OCI-LY7 (cell line): ENCODE measurements at regions of chr9 and their contacts with region 1.

Region 1: DNA sequence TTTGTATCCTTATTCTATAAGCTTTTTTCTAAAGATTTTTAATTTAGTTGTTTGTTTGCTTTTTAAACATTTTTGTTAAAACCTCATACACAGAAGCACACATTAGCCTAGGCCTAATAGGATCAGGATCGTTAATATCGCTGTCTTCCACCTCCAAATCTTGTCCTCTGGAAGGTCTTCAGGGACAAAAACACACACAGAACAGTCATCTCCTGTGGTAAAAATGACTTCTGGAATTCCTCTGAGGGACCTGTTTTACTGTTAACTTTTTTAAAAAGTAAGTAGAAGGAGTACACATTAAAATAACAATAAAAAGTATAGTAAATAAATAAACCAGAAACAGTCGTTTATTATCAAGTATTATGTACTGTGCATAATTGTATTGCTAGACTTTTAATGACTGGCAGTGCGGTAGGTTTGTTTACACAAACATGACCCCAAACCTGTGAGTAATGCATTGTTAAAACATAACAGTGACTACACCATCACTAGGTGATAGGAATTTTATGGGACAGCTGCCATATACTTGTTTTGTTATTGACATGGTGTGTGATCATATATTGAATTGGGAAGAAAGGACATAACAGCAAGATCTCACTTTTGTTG is 109.6 kb downstream of the ZCCHC7 start:
- DNase-seq: no peak
- H3K4me3 ChIP-seq: no peak overlapping the region
- H3K27ac ChIP-seq: no peak overlapping the region
- H3K4me1 ChIP-seq: no peaks in the 10 kb centered on the region
- CTCF ChIP-seq: no peak

Region 2: GRCh38 chr9:37215830-37216229 is 14.2 kb before region 1 on chr9:
- CTCF ChIA-PET with region 1: no interaction called
- POLR2A ChIA-PET with region 1: interaction called, 14 read pairs
- intact Hi-C with region 1: no loop called
- DNase-seq: no peak
- H3K4me3 ChIP-seq: no peak overlapping the region
- H3K27ac ChIP-seq: no peak overlapping the region
- H3K4me1 ChIP-seq: peaks cover 43% of the 10 kb centered on the region
- CTCF ChIP-seq: no peak

Region 3: DNA sequence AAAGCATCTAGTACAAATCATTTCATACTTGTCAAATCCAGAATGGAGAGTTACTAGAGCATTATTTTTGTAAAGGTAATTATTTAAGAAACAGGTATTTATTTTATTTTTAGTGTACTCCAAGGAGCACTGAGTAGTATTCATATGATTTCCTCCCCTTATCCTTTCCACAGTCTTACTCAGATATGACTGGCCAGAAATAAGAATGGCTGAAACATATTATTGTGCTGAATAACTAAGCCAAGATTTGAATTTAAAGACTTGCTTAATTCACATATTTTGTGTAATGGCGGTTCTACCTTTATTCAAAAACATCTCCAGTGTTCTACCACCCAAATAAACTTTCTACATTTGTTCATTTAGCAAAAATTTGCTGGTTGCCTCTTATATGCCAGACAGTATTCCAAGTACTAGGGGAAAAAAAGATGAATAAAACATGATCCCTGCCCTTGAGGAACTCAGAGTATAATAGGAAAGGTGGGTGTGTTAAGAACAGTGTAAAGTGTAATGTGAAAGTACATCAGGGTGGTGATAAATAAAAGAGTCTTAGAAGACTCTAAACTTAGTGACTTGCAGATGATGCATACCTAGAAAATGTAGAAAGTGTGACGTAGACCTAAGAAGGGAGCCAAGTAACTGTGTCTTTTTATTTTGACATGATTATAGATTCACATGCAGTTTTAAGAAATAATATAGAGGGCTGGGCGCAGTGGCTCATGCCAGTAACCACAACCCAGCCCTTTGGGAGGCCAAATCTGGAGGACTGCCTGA is 82.1 kb after region 1 on chr9:
- CTCF ChIA-PET with region 1: no interaction called
- POLR2A ChIA-PET with region 1: no interaction called
- intact Hi-C with region 1: no loop called
- DNase-seq: no peak
- H3K4me3 ChIP-seq: no peak overlapping the region
- H3K27ac ChIP-seq: no peak overlapping the region
- H3K4me1 ChIP-seq: peaks cover 23% of the 10 kb centered on the region
- CTCF ChIP-seq: no peak